Prostate gland (tissue), 2 donors: ENCODE measurements at regions of chr3 and their contacts with region 1.

Region 1: GRCh38 chr3:128178782-128179483 is 25.7 kb downstream of the EEFSEC start:
- DNase-seq: no peak
- H3K4me3 ChIP-seq: no peak overlapping the region
- H3K27ac ChIP-seq: no peak overlapping the region
- H3K4me1 ChIP-seq: no peaks in the 10 kb centered on the region
- H3K27me3 ChIP-seq: no peaks in the 10 kb centered on the region
- CTCF ChIP-seq: no peak
- POLR2A ChIP-seq: no peak

Region 2: DNA sequence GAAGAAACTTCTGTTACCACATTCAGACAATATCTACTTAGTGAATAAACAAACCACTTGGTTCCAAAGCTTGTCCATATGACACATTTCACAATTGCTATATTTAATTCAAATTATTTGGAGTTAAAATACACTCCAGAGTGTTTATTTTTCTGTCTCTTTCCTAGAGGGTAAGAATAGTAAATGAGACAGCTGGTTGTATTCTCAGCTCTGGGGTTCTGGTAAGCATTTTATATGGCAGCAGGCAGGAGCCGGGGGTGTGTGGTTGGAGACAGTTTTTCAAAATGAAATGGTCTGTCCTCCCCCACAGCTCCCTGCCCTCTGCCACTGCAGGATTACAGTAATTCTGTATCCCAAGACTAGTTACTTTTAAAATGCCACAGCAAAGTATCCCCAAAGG is 137.6 kb before region 1 on chr3:
- intact Hi-C with region 1: no loop called
- DNase-seq: no peak
- H3K4me3 ChIP-seq: no peak overlapping the region
- H3K27ac ChIP-seq: no peak overlapping the region
- H3K4me1 ChIP-seq: no peaks in the 10 kb centered on the region
- H3K27me3 ChIP-seq: no peaks in the 10 kb centered on the region
- CTCF ChIP-seq: no peak
- POLR2A ChIP-seq: no peak

Region 3: DNA sequence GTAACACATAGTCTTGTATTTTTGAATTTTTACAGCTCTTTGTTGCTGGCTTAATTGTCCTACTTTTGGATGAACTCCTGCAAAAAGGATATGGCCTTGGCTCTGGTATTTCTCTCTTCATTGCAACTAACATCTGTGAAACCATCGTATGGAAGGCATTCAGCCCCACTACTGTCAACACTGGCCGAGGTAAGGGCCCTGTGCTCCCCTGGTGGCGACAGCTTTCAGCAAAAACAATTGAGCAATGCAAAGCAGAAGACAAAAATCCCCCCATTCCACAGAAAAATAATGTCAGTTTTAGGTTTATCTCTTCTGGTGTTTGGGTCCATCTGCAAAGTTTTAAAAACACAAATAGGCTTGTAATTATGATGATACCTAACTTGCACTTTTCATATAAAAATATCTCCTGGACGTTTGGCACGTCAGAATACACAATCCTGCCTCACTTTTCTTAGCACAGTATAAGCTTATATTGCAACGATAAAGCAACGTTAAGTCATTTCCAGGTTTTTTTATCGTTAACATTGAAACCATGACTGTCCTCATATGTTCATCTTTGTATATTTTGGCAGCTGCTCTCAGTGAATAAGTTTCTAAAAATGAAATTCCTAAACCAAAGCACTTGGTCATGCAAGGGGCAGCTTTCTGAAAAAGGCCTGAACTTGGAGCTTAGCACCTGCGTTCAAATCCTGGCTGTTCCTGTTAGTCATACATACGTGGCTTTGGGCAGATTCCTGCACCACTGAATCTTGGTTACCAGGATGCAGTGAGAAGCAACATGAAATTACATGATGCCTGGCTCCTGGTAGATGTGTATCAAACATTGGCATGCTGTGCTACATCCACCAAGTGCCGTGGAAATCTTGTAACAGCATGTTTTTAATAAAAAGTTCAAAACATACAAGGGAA is 118.2 kb before region 1 on chr3:
- intact Hi-C with region 1: no loop called
- DNase-seq: no peak
- H3K4me3 ChIP-seq: no peak overlapping the region
- H3K27ac ChIP-seq: no peak overlapping the region
- H3K4me1 ChIP-seq: no peaks in the 10 kb centered on the region
- H3K27me3 ChIP-seq: no peaks in the 10 kb centered on the region
- CTCF ChIP-seq: no peak
- POLR2A ChIP-seq: no peak

Region 4: DNA sequence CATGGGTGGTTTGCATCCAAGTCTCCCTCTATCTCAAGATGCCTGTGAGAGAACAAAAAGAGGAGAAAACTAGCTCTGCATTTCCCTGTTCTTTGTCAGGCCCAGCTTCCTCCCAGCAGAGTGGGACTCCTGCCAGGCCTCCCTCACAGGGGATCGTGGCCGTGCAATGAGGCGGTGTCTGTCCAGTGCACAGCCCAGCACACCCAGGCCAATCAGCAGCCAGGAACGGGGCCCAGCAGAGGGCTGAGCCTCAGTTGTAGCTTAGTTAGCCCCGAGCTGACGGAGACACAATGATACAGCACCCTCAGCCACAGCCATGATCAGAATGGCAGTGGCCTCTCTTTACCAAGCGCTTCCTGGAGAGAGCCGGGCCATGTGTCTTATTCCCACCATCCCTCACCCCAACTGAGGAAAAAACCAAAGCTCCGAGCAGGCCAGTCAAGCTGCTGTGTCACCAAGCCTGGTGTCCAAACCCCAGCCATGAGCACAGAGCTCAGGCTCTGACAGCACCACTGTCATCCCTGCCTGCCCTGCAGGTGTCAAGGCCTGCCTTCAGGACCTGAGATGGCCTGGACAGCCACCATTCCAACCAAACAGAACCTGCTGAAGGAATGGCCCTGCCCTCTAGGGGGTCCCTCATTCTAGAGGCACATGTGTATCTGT is 216.7 kb after region 1 on chr3:
- intact Hi-C with region 1: no loop called
- DNase-seq: no peak
- H3K4me3 ChIP-seq: no peak overlapping the region
- H3K27ac ChIP-seq: no peak overlapping the region
- H3K4me1 ChIP-seq: no peaks in the 10 kb centered on the region
- H3K27me3 ChIP-seq: no peaks in the 10 kb centered on the region
- CTCF ChIP-seq: no peak
- POLR2A ChIP-seq: no peak

Region 5: DNA sequence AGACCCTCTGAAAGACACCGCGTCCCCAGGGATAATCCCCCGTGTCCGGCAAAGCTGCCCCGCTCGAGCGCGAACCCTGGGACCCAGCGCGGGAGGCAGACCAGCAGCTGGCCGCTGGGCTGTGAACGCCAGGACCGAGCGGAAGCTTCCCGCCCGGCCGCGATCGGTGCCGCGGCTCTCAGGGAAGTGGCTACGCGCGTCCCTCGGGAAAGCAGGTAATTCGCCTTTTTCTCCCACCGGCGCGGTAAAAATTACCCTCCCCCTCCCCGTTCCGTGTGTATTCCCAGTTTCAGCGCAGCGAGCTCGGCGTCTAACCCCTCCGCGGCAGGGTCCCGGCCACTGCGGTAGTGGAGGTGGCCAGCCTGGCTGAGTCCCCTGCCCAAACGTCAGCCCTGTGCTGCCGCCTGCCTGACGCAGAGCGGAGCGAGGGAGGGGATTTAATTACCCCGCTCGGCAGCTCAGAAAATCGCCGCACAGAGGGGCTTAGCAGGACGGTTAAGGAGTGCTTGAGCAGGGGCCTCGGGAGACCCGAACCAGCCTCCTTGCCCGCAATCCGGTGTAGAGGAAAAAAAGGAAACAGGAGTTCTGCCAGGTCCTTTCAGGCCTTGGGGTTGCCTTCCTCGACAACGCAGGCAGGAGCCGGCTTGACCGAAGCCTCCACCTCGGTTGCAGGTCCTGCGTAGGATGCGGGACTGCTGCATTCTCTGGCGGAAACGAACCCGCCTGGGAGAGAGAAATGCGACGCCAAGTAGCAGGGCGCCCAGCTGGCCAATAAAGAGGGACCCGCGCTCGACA is 311.1 kb after region 1 on chr3:
- intact Hi-C with region 1: loop called (anchors 2 kb)
- DNase-seq: peak; percentile 63
- H3K4me3 ChIP-seq: peak overlapping the region; percentile 85 to 93
- H3K27ac ChIP-seq: peak overlapping the region; percentile 99
- H3K4me1 ChIP-seq: no peaks in the 10 kb centered on the region
- H3K27me3 ChIP-seq: no peaks in the 10 kb centered on the region
- CTCF ChIP-seq: peak in 3 of 4 experiments; percentile 11 to 34 (median 15)
- POLR2A ChIP-seq: peak; percentile 13